ENCODE measurements at regions of chr22 and their contacts with region 1.

Region 1: DNA sequence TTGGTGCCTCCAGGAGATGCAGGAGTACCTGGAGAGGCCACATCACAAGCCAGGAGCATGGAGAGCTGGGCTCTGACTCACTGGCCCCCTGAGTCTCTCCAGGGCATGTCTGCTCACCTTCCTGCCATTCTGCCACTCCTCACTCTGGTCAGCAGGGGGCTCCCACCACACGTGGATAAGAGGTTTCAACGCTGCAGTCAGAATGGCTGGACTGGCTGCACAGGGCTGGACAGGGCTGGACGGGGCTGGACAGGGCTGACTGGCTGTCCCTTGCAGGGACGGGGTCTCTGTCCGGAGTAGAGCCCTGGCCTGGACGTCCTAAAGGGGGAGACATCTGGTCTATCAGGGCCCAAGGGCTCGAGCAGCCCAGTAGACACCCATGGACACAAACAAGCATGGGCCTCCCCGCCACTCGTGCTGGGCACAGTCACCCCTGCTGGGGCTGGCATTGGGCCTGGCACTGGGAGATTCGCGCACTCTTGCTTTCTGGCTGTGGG is 34.6 kb downstream of the CYTH4 start:
- DNase-seq: peak; percentile 59
- ATAC-seq: peak; percentile 82
- H3K4me3 Mint-ChIP-seq: no peak overlapping the region
- H3K27ac Mint-ChIP-seq: no peak overlapping the region
- H3K4me1 Mint-ChIP-seq: peaks cover 26% of the 10 kb centered on the region
- H3K27me3 Mint-ChIP-seq: peaks cover 4% of the 10 kb centered on the region
- CTCF ChIP-seq: no peak

Region 2: GRCh38 chr22:37282385-37282677 is 34.6 kb before region 1 on chr22 and contains the start of gene CYTH4:
- CTCF ChIA-PET with region 1: interaction called, 5 read pairs
- POLR2A ChIA-PET with region 1: interaction called, 6 read pairs
- intact Hi-C with region 1: loop called (anchors 2 kb)
- DNase-seq: peak; percentile 64
- ATAC-seq: peak; percentile 69
- H3K4me3 Mint-ChIP-seq: peak within 1 kb of the TSS; percentile 86
- H3K27ac Mint-ChIP-seq: peak within 1 kb of the TSS; percentile 99
- H3K4me1 Mint-ChIP-seq: peaks cover 81% of the 10 kb centered on the region
- H3K27me3 Mint-ChIP-seq: no peaks in the 10 kb centered on the region
- CTCF ChIP-seq: no peak
- total RNA-seq, gene CYTH4: 37.2 and 40.3 TPM in 2 replicates

Region 3: DNA sequence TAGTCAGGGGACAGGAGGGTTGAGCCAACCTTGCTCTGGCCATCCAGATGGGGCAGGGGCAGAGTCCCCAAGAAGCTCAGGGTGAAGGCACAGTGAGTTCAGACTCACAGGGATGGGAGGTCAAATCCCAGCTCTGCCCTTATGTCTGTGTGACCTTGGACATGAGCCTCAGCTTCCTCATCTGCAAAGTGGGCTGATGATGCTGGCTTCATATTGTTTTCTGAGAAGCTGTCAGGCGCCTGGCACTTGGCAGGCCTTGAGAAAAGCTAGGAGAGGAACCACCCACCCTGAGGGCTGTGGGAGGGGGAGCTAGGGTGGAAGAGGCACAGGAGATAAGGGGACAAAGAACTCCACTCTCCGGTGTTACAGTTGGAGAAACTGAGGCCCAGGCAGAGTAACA is 11.0 kb before region 1 on chr22:
- CTCF ChIA-PET with region 1: interaction called, 10 read pairs
- POLR2A ChIA-PET with region 1: interaction called, 3 read pairs
- intact Hi-C with region 1: loop called (anchors 1 kb)
- DNase-seq: no peak
- ATAC-seq: no peak
- H3K4me3 Mint-ChIP-seq: no peak overlapping the region
- H3K27ac Mint-ChIP-seq: peak overlapping the region; percentile 96
- H3K4me1 Mint-ChIP-seq: peaks cover 77% of the 10 kb centered on the region
- H3K27me3 Mint-ChIP-seq: no peaks in the 10 kb centered on the region
- CTCF ChIP-seq: no peak

Region 4: DNA sequence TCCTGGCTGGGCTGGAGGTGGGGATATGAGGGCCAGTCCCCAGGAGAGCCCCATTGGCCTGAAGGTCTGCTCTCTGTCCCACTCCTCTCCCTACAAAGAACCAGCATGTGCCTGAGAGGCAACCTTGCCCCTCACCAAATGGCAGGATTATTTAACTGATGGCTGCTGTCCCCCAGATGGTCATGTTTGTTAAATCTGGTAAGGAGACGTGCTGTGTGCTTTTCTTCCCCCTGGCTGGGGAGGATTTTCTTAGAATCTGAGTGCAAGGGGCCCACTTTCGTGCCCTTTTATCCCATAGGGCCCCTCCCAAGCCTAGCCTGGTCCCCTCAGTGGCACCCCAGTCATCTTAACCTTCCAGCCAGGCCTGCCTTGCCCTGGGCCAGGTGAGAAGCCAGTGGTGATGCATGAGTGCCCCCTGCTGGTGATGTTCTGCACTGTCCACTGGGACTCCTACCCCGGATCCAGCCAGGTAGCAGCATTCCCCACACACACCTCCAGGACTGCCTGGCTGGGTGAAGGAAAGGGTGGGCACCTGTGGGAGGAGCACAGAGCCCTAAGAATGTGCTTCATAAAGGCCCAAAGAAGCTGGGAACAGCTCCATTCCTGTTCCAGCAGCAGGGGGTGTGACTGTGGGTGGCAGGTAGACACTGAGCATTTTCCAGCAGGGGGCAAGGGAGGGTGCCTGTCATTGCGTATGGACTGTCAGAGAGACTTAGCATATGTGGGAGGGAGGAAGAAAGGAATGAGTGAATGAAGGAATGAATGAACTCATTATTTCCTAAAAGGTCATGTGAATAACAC is 140.4 kb after region 1 on chr22:
- CTCF ChIA-PET with region 1: interaction called, 45 read pairs
- POLR2A ChIA-PET with region 1: no interaction called
- intact Hi-C with region 1: loop called (anchors 1 kb)
- DNase-seq: peak; percentile 71
- ATAC-seq: peak; percentile 95
- H3K4me3 Mint-ChIP-seq: no peak overlapping the region
- H3K27ac Mint-ChIP-seq: no peak overlapping the region
- H3K4me1 Mint-ChIP-seq: no peaks in the 10 kb centered on the region
- H3K27me3 Mint-ChIP-seq: no peaks in the 10 kb centered on the region
- CTCF ChIP-seq: peak; percentile 42

Region 5: DNA sequence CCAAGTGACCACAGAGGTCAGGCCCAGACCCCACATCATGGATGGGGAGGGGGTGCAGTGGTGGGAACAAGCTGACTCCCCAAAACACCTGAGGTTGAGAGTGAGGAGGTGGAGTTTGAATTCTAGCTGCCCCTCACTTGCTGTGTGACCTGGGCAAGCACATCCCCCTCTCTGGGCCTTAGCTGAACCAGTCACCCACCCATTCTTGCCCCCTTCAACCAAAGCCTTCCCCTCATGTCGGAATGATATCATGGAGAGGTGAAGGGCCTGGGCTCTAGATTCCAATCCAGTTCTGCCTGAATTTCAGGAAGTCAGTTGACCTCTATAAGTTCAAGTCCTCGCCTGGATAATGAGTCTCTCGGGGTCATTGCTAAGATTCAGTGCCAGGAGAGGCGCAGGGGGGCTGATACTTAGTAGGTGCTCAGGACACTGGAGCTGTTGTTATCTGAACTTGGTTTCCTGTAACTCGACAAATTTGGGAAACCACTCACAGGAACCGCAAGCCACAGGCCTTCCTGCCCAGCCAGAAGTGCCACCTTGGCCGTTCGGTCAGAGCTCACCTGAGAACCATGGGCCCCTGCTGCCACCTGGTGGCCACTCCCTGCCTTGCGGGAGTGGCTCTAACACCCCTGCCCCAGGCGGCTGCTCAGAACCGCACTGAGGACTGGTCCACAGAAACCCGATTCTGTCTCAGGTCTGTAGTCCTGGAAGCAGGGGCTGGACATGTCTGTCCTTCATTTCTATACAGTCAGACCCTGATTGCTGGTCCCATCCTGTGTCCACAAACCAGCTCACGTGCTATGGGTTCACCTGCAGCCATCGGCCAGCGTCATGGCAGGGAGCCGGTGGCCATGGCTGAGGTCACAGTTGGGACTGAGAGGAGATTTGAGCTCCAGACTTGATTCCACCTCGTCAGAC is 250.2 kb after region 1 on chr22:
- CTCF ChIA-PET with region 1: interaction called, 8 read pairs
- POLR2A ChIA-PET with region 1: no interaction called
- intact Hi-C with region 1: loop called (anchors 1 kb)
- DNase-seq: peak; percentile 84
- ATAC-seq: peak; percentile 94
- H3K4me3 Mint-ChIP-seq: peak overlapping the region; percentile 32
- H3K27ac Mint-ChIP-seq: peak overlapping the region; percentile 53
- H3K4me1 Mint-ChIP-seq: peaks cover 21% of the 10 kb centered on the region
- H3K27me3 Mint-ChIP-seq: peaks cover 21% of the 10 kb centered on the region
- CTCF ChIP-seq: peak; percentile 90

Measured in activated B cell treated with CpG ODN at 0.5 μM for 24 hours (primary cell).